ENCODE measurements at regions of chr16 and their contacts with region 1.

Region 1: GRCh38 chr16:56964243-56965148 is 2.7 kb downstream of the CETP start:
- DNase-seq: peak; percentile 90 to 99 (median 96)
- ATAC-seq: peak; percentile 98
- H3K4me3 ChIP-seq: no peak overlapping the region
- H3K4me3 Mint-ChIP-seq: no peak overlapping the region
- H3K27ac ChIP-seq: no peak overlapping the region
- H3K27ac Mint-ChIP-seq: no peak overlapping the region
- H3K4me1 ChIP-seq: peaks cover 20% of the 10 kb centered on the region
- H3K4me1 Mint-ChIP-seq: peaks cover 19% of the 10 kb centered on the region
- H3K27me3 ChIP-seq: no peaks in the 10 kb centered on the region
- H3K27me3 Mint-ChIP-seq: no peaks in the 10 kb centered on the region
- CTCF ChIP-seq: peak; percentile 99

Region 2: DNA sequence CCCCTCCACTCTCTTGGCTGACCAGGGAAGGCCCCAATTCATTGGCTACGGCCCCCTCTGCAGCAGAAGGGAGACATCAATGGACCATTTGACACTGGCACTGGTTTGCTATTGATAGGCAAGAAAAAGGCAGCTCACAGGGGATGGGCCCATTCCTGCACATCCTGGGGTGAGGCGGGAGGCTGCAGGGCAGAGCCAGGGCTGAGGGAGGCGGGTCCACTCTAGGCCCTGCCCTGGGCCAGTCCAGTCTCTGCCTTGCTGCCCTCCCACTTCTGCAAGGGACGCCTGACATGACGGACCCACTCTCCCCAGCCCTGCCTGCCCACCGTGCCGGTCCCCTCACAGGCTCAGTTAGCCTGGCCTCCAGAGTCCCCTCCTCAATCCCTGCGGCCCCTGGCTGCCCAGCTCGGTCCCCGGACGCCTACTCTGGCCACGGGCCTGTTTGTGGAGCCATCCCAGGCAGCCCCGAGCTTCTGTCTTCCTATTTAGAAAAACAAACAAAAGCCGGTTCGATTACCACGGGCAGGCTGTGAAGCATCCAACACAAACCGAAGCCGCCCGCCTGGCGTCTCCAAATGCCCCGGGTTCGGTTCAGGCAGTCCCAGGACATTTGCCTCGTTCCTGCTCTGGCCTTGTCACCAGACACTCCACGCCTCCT is 1873.2 kb before region 1 on chr16:
- CTCF ChIA-PET with region 1: no interaction called
- POLR2A ChIA-PET with region 1: no interaction called
- intact Hi-C with region 1: no loop called
- DNase-seq: no peak
- ATAC-seq: no peak
- H3K4me3 ChIP-seq: no peak overlapping the region
- H3K4me3 Mint-ChIP-seq: no peak overlapping the region
- H3K27ac ChIP-seq: no peak overlapping the region
- H3K27ac Mint-ChIP-seq: no peak overlapping the region
- H3K4me1 ChIP-seq: no peaks in the 10 kb centered on the region
- H3K4me1 Mint-ChIP-seq: no peaks in the 10 kb centered on the region
- H3K27me3 ChIP-seq: no peaks in the 10 kb centered on the region
- H3K27me3 Mint-ChIP-seq: no peaks in the 10 kb centered on the region
- CTCF ChIP-seq: no peak

Region 3: DNA sequence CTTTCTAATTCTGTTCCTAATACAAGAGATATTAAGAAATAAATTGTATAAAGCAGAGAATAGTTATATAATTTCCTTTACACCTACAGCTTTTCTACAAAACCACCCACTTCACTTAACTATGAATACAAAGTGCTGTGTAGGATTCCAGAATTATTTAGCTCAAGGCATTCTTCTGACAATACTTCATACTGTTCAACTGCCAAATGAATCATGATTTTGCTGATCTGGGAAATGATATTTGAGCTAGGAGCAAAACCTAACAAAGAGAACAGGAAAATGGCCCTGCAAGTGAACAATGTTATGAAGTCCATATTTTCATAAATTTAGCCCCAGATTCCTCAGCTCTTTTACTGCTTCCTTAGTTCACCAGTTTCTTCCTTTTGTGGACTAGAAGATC is 457.6 kb before region 1 on chr16:
- CTCF ChIA-PET with region 1: no interaction called
- POLR2A ChIA-PET with region 1: no interaction called
- intact Hi-C with region 1: no loop called
- DNase-seq: no peak
- ATAC-seq: no peak
- H3K4me3 ChIP-seq: no peak overlapping the region
- H3K4me3 Mint-ChIP-seq: no peak overlapping the region
- H3K27ac ChIP-seq: no peak overlapping the region
- H3K27ac Mint-ChIP-seq: no peak overlapping the region
- H3K4me1 ChIP-seq: no peaks in the 10 kb centered on the region
- H3K4me1 Mint-ChIP-seq: no peaks in the 10 kb centered on the region
- H3K27me3 ChIP-seq: no peaks in the 10 kb centered on the region
- H3K27me3 Mint-ChIP-seq: no peaks in the 10 kb centered on the region
- CTCF ChIP-seq: no peak

Region 4: GRCh38 chr16:57000271-57001025 is 36.0 kb after region 1 on chr16:
- CTCF ChIA-PET with region 1: interaction called, 13 read pairs
- POLR2A ChIA-PET with region 1: no interaction called
- intact Hi-C with region 1: no loop called
- DNase-seq: peak in 5 of 14 experiments; percentile 30 to 61 (median 45)
- ATAC-seq: peak; percentile 54
- H3K4me3 ChIP-seq: peak overlapping the region; percentile 32
- H3K4me3 Mint-ChIP-seq: peak overlapping the region; percentile 27
- H3K27ac ChIP-seq: peak overlapping the region; percentile 69 to 88
- H3K27ac Mint-ChIP-seq: peak overlapping the region; percentile 96
- H3K4me1 ChIP-seq: peaks cover 89% of the 10 kb centered on the region
- H3K4me1 Mint-ChIP-seq: peaks cover 96% of the 10 kb centered on the region
- H3K27me3 ChIP-seq: no peaks in the 10 kb centered on the region
- H3K27me3 Mint-ChIP-seq: no peaks in the 10 kb centered on the region
- CTCF ChIP-seq: no peak

Region 5: GRCh38 chr16:57023541-57024249 is 59.2 kb after region 1 on chr16:
- CTCF ChIA-PET with region 1: interaction called, 17 read pairs
- POLR2A ChIA-PET with region 1: no interaction called
- intact Hi-C with region 1: no loop called
- DNase-seq: peak; percentile 44 to 93 (median 68)
- ATAC-seq: peak; percentile 89
- H3K4me3 ChIP-seq: peak overlapping the region; percentile 17
- H3K4me3 Mint-ChIP-seq: peak overlapping the region; percentile 27
- H3K27ac ChIP-seq: peak overlapping the region; percentile 23 to 69
- H3K27ac Mint-ChIP-seq: peak overlapping the region; percentile 84
- H3K4me1 ChIP-seq: peaks cover 93% of the 10 kb centered on the region
- H3K4me1 Mint-ChIP-seq: peaks cover 92% of the 10 kb centered on the region
- H3K27me3 ChIP-seq: no peaks in the 10 kb centered on the region
- H3K27me3 Mint-ChIP-seq: no peaks in the 10 kb centered on the region
- CTCF ChIP-seq: no peak

Region 6: DNA sequence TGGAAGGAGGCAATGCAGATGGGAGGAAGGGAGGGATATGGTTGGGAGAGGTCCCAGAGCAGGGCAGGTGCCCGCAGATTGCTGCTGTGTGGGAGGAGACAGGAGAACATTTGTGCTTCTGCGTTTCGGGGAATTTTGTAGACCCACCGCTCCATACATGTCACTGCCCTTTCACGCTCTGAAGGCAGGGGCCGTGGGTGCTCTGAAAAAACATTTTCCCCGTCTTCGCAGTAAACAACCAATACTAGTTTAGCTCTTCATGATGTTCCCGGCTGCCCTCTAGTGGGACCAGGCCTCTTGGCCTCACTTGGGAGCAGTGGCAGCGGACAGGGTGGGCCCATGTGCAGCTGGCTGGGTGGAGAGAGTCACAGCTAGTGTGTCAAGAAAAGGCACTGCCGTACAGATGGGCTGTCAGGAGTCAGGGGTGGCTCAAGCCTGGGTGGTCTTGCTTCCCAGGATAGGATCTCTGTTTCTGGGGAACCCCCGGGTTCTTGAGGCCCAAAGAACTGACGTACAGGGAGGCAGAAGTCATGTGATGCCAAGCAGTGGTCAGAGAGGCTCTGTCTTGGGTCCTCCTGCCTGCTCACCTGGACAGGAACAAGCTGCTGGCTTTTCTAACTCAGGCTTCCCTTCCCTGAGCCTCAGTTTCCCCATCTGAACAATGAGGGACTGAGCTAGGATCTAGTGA is 81.3 kb after region 1 on chr16:
- CTCF ChIA-PET with region 1: interaction called, 22 read pairs
- POLR2A ChIA-PET with region 1: interaction called, 5 read pairs
- intact Hi-C with region 1: loop called (anchors 1 kb)
- DNase-seq: peak in 10 of 14 experiments; percentile 22 to 60 (median 38)
- ATAC-seq: no peak
- H3K4me3 ChIP-seq: no peak overlapping the region
- H3K4me3 Mint-ChIP-seq: no peak overlapping the region
- H3K27ac ChIP-seq: peak overlapping the region; percentile 32 to 44
- H3K27ac Mint-ChIP-seq: peak overlapping the region; percentile 85
- H3K4me1 ChIP-seq: peaks cover 60% of the 10 kb centered on the region
- H3K4me1 Mint-ChIP-seq: peaks cover 50% of the 10 kb centered on the region
- H3K27me3 ChIP-seq: no peaks in the 10 kb centered on the region
- H3K27me3 Mint-ChIP-seq: no peaks in the 10 kb centered on the region
- CTCF ChIP-seq: peak; percentile 42

Region 7: DNA sequence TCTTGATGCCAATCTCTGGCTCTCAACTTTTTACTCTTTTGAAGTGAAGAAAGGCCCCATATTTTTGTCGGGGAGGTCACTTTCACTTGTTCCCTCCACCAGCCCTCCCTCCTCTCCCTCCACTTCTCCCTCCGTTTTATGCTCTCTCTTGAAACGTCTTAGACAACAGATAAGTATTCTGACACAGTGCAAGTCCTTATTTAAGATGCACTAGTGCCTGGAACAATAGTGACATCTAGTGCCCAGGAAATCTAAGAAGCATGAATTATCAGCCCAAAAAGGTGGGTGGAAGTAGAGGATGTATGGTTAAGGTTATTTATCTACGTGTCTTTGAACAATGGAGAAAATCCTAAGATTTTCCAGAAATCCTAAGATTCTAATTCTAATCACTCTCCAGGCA is 203.5 kb after region 1 on chr16:
- CTCF ChIA-PET with region 1: interaction called, 6 read pairs
- POLR2A ChIA-PET with region 1: no interaction called
- intact Hi-C with region 1: loop called (anchors 1 kb)
- DNase-seq: peak in 4 of 14 experiments; percentile 24 to 84 (median 80)
- ATAC-seq: peak; percentile 98
- H3K4me3 ChIP-seq: no peak overlapping the region
- H3K4me3 Mint-ChIP-seq: no peak overlapping the region
- H3K27ac ChIP-seq: no peak overlapping the region
- H3K27ac Mint-ChIP-seq: no peak overlapping the region
- H3K4me1 ChIP-seq: peaks cover 5% of the 10 kb centered on the region
- H3K4me1 Mint-ChIP-seq: peaks cover 27% of the 10 kb centered on the region
- H3K27me3 ChIP-seq: no peaks in the 10 kb centered on the region
- H3K27me3 Mint-ChIP-seq: no peaks in the 10 kb centered on the region
- CTCF ChIP-seq: peak; percentile 75

Measured in CD4-positive, alpha-beta T cell (primary cell).